ENCODE measurements at regions of chr2 and their contacts with region 1.

Region 1: GRCh38 chr2:85678794-85679672 is 11.0 kb upstream of the SFTPB start:
- DNase-seq: peak; percentile 92
- ATAC-seq: peak; percentile 96
- H3K4me3 Mint-ChIP-seq: no peak overlapping the region; the same call in 1 of the 2 replicates
- H3K27ac Mint-ChIP-seq: no peak overlapping the region
- H3K4me1 Mint-ChIP-seq: peaks cover 12% of the 10 kb centered on the region
- H3K27me3 Mint-ChIP-seq: peaks cover 5% of the 10 kb centered on the region
- CTCF ChIP-seq: peak; percentile 96

Region 2: GRCh38 chr2:85511008-85511811 is 167.8 kb before region 1 on chr2:
- CTCF ChIA-PET with region 1: no interaction called
- POLR2A ChIA-PET with region 1: no interaction called
- DNase-seq: no peak
- ATAC-seq: no peak
- H3K4me3 Mint-ChIP-seq: no peak overlapping the region
- H3K27ac Mint-ChIP-seq: no peak overlapping the region
- H3K4me1 Mint-ChIP-seq: no peaks in the 10 kb centered on the region
- H3K27me3 Mint-ChIP-seq: no peaks in the 10 kb centered on the region
- CTCF ChIP-seq: no peak

Region 3: GRCh38 chr2:85662899-85663593 is 16.0 kb before region 1 on chr2:
- CTCF ChIA-PET with region 1: interaction called, 10 read pairs
- POLR2A ChIA-PET with region 1: no interaction called
- DNase-seq: no peak
- ATAC-seq: peak; percentile 25
- H3K4me3 Mint-ChIP-seq: no peak overlapping the region
- H3K27ac Mint-ChIP-seq: no peak overlapping the region
- H3K4me1 Mint-ChIP-seq: no peaks in the 10 kb centered on the region
- H3K27me3 Mint-ChIP-seq: no peaks in the 10 kb centered on the region
- CTCF ChIP-seq: no peak

Region 4: DNA sequence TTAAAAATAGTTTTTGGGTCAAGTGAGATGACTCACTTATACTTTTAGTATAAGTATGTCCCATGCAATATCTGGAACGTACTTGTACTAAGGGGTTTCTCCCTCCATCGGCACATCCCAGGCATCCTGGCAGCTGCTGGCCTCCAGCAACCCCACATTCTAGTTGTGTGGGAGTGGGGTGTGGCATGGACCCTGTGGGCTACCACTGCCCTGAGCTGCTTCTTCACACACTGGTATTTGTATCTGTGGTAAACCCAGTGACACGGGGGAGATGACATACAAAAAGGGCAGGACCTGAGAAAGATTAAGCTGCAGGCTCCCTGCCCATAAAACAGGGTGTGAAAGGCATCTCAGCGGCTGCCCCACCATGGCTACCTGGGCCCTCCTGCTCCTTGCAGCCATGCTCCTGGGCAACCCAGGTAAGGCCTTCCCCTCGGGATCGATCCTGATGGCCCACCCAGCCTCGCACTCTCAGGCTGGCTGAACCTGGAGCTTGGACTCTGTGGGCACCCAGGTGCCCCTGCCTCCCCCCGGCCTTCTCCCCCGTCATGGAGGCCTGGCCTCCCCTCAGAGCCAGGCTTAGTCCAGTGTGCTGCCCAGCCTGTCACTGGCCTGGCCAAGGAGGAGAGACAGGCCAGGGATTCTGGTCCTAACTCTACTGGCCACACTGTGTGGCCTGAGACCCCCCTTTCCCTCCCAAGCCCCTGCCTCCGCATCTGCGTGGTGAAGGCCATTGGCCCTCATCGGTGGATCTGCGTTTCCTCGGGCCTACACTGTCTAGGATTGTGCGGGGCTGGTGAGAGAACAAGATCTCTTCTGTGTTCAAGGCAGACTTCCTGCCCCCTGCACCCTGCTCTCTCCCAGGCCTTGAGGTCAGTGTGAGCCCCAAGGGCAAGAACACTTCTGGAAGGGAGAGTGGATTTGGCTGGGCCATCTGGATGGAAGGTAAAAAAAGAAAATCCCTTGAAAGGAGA is 15.3 kb after region 1 on chr2 and contains the start of gene GNLY:
- CTCF ChIA-PET with region 1: interaction called, 16 read pairs
- POLR2A ChIA-PET with region 1: no interaction called
- DNase-seq: no peak
- ATAC-seq: no peak
- H3K4me3 Mint-ChIP-seq: no peak within 1 kb of the TSS
- H3K27ac Mint-ChIP-seq: no peak within 1 kb of the TSS
- H3K4me1 Mint-ChIP-seq: no peaks in the 10 kb centered on the region
- H3K27me3 Mint-ChIP-seq: no peaks in the 10 kb centered on the region; the same call in 1 of the 2 replicates
- CTCF ChIP-seq: no peak
- total RNA-seq, gene GNLY: 0.44 TPM in 1 of 3 replicates, not detected in the others

Region 5: GRCh38 chr2:85741833-85742455 is 62.9 kb after region 1 on chr2:
- CTCF ChIA-PET with region 1: interaction called, 10 read pairs
- POLR2A ChIA-PET with region 1: no interaction called
- DNase-seq: no peak
- ATAC-seq: no peak
- H3K4me3 Mint-ChIP-seq: no peak overlapping the region
- H3K27ac Mint-ChIP-seq: no peak overlapping the region
- H3K4me1 Mint-ChIP-seq: peaks cover 7% of the 10 kb centered on the region
- H3K27me3 Mint-ChIP-seq: peaks cover 10% of the 10 kb centered on the region
- CTCF ChIP-seq: no peak